ENCODE measurements at regions of chrX and their contacts with region 1.

Region 1: GRCh38 chrX:70454441-70455365 is 10.1 kb downstream of the DLG3 start:
- DNase-seq: no peak
- H3K4me3 ChIP-seq: peak overlapping the region; percentile 37 to 69 (median 56)
- H3K27ac ChIP-seq: peak overlapping the region; percentile 77 to 88 (median 86)
- H3K4me1 ChIP-seq: peaks cover 0 to 51% (median 3%) of the 10 kb centered on the region in 3 donors
- H3K27me3 ChIP-seq: no peaks in the 10 kb centered on the region
- CTCF ChIP-seq: peak; percentile 27 to 85 (median 79)
- POLR2A ChIP-seq: no peak

Region 2: GRCh38 chrX:69919749-69920148 is 535.0 kb before region 1 on chrX:
- intact Hi-C with region 1: no loop called
- DNase-seq: no peak
- H3K4me3 ChIP-seq: no peak overlapping the region
- H3K27ac ChIP-seq: no peak overlapping the region
- H3K4me1 ChIP-seq: no peaks in the 10 kb centered on the region
- H3K27me3 ChIP-seq: no peaks in the 10 kb centered on the region
- CTCF ChIP-seq: no peak
- POLR2A ChIP-seq: no peak

Region 3: GRCh38 chrX:70554081-70554480 is 99.4 kb after region 1 on chrX:
- intact Hi-C with region 1: loop called (anchors 10 kb)
- DNase-seq: no peak
- H3K4me3 ChIP-seq: no peak overlapping the region
- H3K27ac ChIP-seq: no peak overlapping the region
- H3K4me1 ChIP-seq: no peaks in the 10 kb centered on the region
- H3K27me3 ChIP-seq: no peaks in the 10 kb centered on the region
- CTCF ChIP-seq: peak in 2 of 6 experiments; percentile 32 to 35
- POLR2A ChIP-seq: no peak

Region 4: DNA sequence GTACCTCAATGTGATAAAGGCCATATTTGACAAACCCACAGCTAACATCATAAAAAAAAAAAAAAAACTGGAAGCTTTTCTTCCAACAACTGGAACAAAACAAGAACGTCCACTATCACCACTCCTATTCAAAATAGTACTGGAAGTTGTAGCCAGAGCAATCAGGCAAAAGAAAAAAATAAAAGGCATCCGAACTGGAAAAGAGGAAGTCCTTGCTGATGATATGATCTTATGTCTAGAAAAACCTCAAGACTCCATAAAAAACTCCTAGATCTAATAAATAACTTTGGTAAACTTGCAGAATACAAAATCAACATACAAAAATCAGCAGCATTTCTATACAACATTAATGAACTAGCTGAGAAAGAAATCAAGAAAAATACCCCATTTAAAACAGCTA is 319.5 kb after region 1 on chrX:
- intact Hi-C with region 1: no loop called
- DNase-seq: no peak
- H3K4me3 ChIP-seq: no peak overlapping the region
- H3K27ac ChIP-seq: no peak overlapping the region
- H3K4me1 ChIP-seq: no peaks in the 10 kb centered on the region
- H3K27me3 ChIP-seq: no peaks in the 10 kb centered on the region
- CTCF ChIP-seq: no peak
- POLR2A ChIP-seq: no peak